Lower leg skin (tissue), 4 donors: ENCODE measurements at regions of chr9 and their contacts with region 1.

Region 1: DNA sequence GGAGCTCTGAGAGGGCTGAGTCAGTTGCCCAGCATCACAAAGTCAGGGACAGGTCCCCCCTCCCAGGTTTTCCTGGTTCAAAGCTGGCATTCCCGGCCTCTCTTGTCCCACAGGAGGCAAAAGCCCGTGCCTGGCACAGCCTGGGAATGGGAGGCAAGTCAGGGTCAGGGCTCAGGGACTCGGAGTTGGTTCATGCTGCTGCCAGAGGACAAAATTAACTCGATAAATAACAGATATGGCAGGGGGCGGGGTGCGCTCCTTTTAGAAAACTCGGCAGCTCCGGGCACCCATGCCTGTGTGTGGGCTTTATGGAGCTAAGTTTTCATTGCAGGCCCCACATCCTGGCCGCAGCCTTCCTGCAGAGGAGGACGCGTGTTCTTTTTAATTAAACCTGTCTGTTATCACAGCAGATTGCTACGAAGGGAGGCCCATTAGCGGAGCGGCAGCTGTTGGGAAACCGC is 62.8 kb upstream of the LMX1B start:
- DNase-seq: no peak
- H3K4me3 ChIP-seq: no peak overlapping the region
- CTCF ChIP-seq: no peak
- POLR2A ChIP-seq: no peak

Region 2: DNA sequence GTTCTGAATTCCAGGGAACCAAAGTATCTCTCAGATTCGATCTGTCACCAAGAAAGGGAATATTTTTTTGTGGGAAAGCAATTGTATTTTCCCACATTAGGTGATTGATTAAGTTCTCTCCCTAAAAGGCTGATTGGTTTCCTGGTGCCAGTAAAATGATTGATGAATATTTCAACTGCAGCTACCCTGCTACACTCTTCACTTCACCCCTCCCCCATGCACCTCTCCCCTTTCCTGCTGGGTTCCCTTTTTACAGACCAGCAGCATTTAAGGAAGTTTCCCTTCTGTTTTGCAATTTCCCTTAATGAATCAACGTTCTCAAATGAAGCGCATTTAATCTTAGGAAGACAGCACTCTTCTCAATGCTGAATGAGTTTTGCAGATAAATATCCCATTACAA is 1792.9 kb before region 1 on chr9:
- intact Hi-C with region 1: loop called (anchors 5 kb)
- DNase-seq: no peak
- H3K4me3 ChIP-seq: no peak overlapping the region
- CTCF ChIP-seq: no peak
- POLR2A ChIP-seq: no peak

Region 3: DNA sequence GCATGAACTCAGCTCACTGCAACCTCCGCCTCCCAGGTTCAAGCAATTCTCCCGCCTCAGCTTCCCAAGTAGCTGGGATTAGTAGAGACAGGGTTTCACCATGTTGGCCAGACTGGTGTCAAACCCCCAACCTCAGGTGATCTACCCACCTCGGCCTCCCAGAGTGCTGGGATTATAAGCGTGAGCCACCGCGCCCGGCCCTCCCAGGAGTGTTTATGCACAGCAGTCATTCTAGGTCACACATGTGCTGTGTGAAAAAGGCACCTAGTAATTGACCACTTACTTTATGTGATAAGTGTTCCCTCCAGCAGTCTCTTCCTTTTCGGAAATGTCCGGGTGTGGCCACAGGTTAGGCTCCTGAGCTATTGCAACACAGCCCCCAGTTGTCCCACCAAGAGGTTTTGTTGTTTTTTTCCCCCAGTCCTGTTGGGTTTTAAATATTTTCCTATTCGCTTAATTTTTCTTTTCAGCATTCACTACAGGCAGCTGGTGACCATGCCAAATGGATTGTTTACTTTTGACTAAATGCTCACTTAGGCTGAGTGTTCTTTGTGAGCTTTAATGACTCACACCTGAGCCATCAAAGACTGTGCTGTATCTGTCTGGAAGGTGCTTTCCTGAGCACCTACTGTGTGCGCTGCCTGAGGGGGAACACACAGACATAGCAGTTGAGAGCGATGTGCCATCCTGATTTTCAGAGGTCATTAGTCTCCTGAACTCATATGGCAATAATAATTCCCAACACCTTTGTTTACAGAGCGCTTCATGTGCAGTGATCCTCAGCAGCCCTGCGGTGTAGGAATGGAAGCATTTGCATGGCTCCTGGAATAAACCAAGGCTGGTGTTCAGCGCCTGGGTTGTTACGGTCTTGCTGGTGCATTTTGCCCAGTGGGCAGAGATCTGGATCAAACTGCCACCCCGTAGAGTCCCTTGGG is 130.0 kb before region 1 on chr9:
- intact Hi-C with region 1: no loop called
- DNase-seq: no peak
- H3K4me3 ChIP-seq: no peak overlapping the region
- CTCF ChIP-seq: no peak
- POLR2A ChIP-seq: no peak